ENCODE measurements at regions of chr1 and their contacts with region 1.

Region 1: DNA sequence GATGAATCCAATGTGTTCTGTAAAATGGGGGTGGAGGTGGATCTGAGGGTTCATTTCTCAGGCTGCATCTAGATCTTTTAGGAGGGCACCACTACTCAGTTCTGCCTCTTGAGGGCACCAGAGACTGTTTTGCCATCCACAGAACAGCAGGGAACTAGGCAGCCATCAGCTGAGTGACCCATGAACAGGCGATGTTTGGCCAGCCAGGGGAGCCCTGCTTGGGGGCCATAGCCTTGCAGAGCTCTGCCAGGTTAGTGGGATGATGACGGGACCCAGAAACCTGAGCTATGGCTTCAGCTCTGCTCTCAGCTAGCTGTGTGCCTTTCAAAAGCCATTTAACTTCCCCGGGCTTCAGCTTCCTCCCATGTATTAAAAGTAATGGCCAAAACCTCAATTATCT is 13.4 kb upstream of the NOS1AP start:
- DNase-seq: peak; percentile 50
- H3K4me3 ChIP-seq: no peak overlapping the region
- H3K27ac ChIP-seq: no peak overlapping the region
- H3K4me1 ChIP-seq: peaks cover 20% of the 10 kb centered on the region
- H3K27me3 ChIP-seq: no peaks in the 10 kb centered on the region
- CTCF ChIP-seq: peak; percentile 92 to 97

Region 2: DNA sequence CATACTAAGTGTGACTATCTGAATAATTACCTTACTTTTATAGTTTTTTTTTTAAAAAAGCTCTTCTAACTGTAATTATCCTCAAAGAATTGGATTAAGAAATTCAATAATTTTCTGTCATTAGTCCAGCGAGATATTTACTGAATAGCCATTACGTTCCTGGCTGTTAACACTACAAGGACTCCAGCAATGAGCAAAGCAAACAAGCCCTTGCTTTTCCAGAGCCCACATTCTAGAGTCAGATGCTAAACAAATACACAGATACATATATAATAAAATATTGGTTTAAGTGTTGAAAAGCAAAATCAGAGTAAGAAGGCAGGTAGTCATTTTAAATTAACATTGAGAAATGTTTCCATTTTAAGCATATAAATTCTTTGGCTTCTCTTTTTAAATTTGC is 171.6 kb before region 1 on chr1:
- CTCF ChIA-PET with region 1: no interaction called
- dilution Hi-C with region 1: no loop called
- in situ Hi-C with region 1: no loop called
- intact Hi-C with region 1: no loop called
- DNase-seq: no peak
- H3K4me3 ChIP-seq: no peak overlapping the region
- H3K27ac ChIP-seq: no peak overlapping the region
- H3K4me1 ChIP-seq: peaks cover 13% of the 10 kb centered on the region
- H3K27me3 ChIP-seq: no peaks in the 10 kb centered on the region
- CTCF ChIP-seq: no peak

Region 3: GRCh38 chr1:161978011-161978790 is 77.8 kb before region 1 on chr1:
- CTCF ChIA-PET with region 1: no interaction called
- dilution Hi-C with region 1: no loop called
- in situ Hi-C with region 1: no loop called
- intact Hi-C with region 1: no loop called
- DNase-seq: no peak
- H3K4me3 ChIP-seq: no peak overlapping the region
- H3K27ac ChIP-seq: no peak overlapping the region
- H3K4me1 ChIP-seq: no peaks in the 10 kb centered on the region
- H3K27me3 ChIP-seq: peaks cover 16% of the 10 kb centered on the region
- CTCF ChIP-seq: no peak

Region 4: DNA sequence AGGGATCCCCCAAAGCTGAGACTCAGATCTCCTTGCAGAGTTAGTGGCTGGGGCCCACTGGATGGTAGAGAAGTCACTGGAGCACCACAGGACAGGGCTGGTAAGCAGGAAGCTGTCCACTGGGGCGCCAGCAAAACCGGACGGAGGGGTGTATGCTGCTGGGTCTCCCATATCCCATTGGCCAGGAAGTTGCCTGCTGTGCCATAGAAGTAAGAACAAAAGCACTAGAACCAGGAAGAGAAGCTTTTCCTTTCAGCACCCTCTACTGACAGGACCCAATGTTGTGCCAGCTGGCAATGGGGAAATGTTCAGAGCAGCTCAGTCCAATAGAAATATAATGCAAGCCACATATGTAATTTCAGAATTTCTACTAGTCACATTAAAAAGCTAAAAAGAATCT is 174.1 kb after region 1 on chr1:
- CTCF ChIA-PET with region 1: no interaction called
- dilution Hi-C with region 1: no loop called
- in situ Hi-C with region 1: no loop called
- intact Hi-C with region 1: loop called (anchors 1 kb)
- DNase-seq: no peak
- H3K4me3 ChIP-seq: no peak overlapping the region
- H3K27ac ChIP-seq: no peak overlapping the region
- H3K4me1 ChIP-seq: no peaks in the 10 kb centered on the region
- H3K27me3 ChIP-seq: no peaks in the 10 kb centered on the region
- CTCF ChIP-seq: peak in 1 of 2 donors; percentile 41

Region 5: GRCh38 chr1:162357681-162358266 is 301.7 kb after region 1 on chr1:
- CTCF ChIA-PET with region 1: no interaction called
- dilution Hi-C with region 1: no loop called
- in situ Hi-C with region 1: no loop called
- intact Hi-C with region 1: loop called (anchors 1 kb)
- DNase-seq: peak; percentile 33
- H3K4me3 ChIP-seq: no peak overlapping the region
- H3K27ac ChIP-seq: no peak overlapping the region
- H3K4me1 ChIP-seq: no peaks in the 10 kb centered on the region
- H3K27me3 ChIP-seq: no peaks in the 10 kb centered on the region
- CTCF ChIP-seq: peak; percentile 51 to 72

Region 6: GRCh38 chr1:162497723-162498500 is 441.9 kb after region 1 on chr1 and contains the start of gene UHMK1:
- CTCF ChIA-PET with region 1: no interaction called
- dilution Hi-C with region 1: no loop called
- in situ Hi-C with region 1: no loop called
- intact Hi-C with region 1: loop called (anchors 5 kb)
- DNase-seq: peak; percentile 84
- H3K4me3 ChIP-seq: peak within 1 kb of the TSS; percentile 80 to 96 (median 81)
- H3K27ac ChIP-seq: peak within 1 kb of the TSS; percentile 67
- H3K4me1 ChIP-seq: peaks cover 12% of the 10 kb centered on the region
- H3K27me3 ChIP-seq: no peaks in the 10 kb centered on the region
- CTCF ChIP-seq: peak in 1 of 2 donors; percentile 2
- total RNA-seq, gene UHMK1: 59.5 to 97.5 TPM

Measured in mammary epithelial cell (primary cell).